ENCODE measurements at regions of chr21 and their contacts with region 1.

Region 1: DNA sequence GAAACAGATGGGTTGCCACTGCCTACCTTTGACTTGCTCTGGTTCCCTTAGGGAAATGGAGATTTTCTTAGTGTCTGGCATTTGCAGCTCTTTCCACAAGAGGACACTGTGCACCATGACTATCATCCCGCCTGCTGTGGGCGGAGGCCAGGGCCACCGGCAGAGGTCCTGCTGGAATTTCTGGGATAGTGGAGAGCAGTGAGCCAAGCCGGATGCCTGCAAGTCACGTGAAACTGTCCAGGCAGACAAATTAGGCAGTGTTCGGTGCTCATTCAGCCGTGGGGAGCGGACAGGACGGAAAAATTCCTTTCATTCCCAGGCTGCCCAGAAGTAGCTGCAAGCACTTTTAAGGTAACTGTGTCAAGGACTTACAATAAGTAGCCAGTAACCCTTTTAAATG is 43.4 kb downstream of the IGSF5 start:
- DNase-seq: peak; percentile 73
- H3K4me3 Mint-ChIP-seq: no peak overlapping the region
- H3K27ac Mint-ChIP-seq: no peak overlapping the region
- H3K4me1 Mint-ChIP-seq: no peaks in the 10 kb centered on the region
- H3K27me3 Mint-ChIP-seq: peaks cover 16% of the 10 kb centered on the region
- CTCF ChIP-seq: peak; percentile 55

Region 2: GRCh38 chr21:39911286-39912199 is 123.2 kb after region 1 on chr21:
- CTCF ChIA-PET with region 1: interaction called, 6 read pairs
- intact Hi-C with region 1: loop called (anchors 1 kb)
- DNase-seq: peak; percentile 21
- H3K4me3 Mint-ChIP-seq: no peak overlapping the region
- H3K27ac Mint-ChIP-seq: no peak overlapping the region
- H3K4me1 Mint-ChIP-seq: no peaks in the 10 kb centered on the region
- H3K27me3 Mint-ChIP-seq: peaks cover 44% of the 10 kb centered on the region
- CTCF ChIP-seq: no peak

Region 3: GRCh38 chr21:40120940-40121575 is 332.7 kb after region 1 on chr21:
- CTCF ChIA-PET with region 1: interaction called, 13 read pairs
- intact Hi-C with region 1: loop called (anchors 1 kb)
- DNase-seq: no peak
- H3K4me3 Mint-ChIP-seq: no peak overlapping the region
- H3K27ac Mint-ChIP-seq: no peak overlapping the region
- H3K4me1 Mint-ChIP-seq: no peaks in the 10 kb centered on the region
- H3K27me3 Mint-ChIP-seq: no peaks in the 10 kb centered on the region
- CTCF ChIP-seq: peak; percentile 32

Measured in Calu3 (cell line).